OCI-LY7 (cell line): ENCODE measurements at regions of chr7 and their contacts with region 1.

Region 1: GRCh38 chr7:90972906-90973550 is 291.2 kb upstream of the FZD1 start:
- DNase-seq: no peak
- H3K4me3 ChIP-seq: no peak overlapping the region
- H3K27ac ChIP-seq: no peak overlapping the region
- H3K4me1 ChIP-seq: no peaks in the 10 kb centered on the region
- CTCF ChIP-seq: no peak

Region 2: GRCh38 chr7:90320801-90321494 is 652.1 kb before region 1 on chr7 and contains the start of gene FAM237B:
- CTCF ChIA-PET with region 1: no interaction called
- POLR2A ChIA-PET with region 1: no interaction called
- intact Hi-C with region 1: no loop called
- DNase-seq: no peak
- H3K4me3 ChIP-seq: no peak within 1 kb of the TSS
- H3K27ac ChIP-seq: no peak within 1 kb of the TSS
- H3K4me1 ChIP-seq: no peaks in the 10 kb centered on the region
- CTCF ChIP-seq: no peak
- total RNA-seq, gene FAM237B: not detected in 2 replicates

Region 3: GRCh38 chr7:90910136-90910535 is 62.9 kb before region 1 on chr7:
- CTCF ChIA-PET with region 1: no interaction called
- POLR2A ChIA-PET with region 1: no interaction called
- intact Hi-C with region 1: no loop called
- DNase-seq: no peak
- H3K4me3 ChIP-seq: no peak overlapping the region
- H3K27ac ChIP-seq: no peak overlapping the region
- H3K4me1 ChIP-seq: no peaks in the 10 kb centered on the region
- CTCF ChIP-seq: no peak

Region 4: GRCh38 chr7:91112902-91113341 is 139.9 kb after region 1 on chr7:
- CTCF ChIA-PET with region 1: no interaction called
- POLR2A ChIA-PET with region 1: interaction called, 10 read pairs
- intact Hi-C with region 1: no loop called
- DNase-seq: no peak
- H3K4me3 ChIP-seq: no peak overlapping the region
- H3K27ac ChIP-seq: no peak overlapping the region
- H3K4me1 ChIP-seq: no peaks in the 10 kb centered on the region
- CTCF ChIP-seq: no peak